HepG2 (cell line): ENCODE measurements at regions of chr20 and their contacts with region 1.

Region 1: DNA sequence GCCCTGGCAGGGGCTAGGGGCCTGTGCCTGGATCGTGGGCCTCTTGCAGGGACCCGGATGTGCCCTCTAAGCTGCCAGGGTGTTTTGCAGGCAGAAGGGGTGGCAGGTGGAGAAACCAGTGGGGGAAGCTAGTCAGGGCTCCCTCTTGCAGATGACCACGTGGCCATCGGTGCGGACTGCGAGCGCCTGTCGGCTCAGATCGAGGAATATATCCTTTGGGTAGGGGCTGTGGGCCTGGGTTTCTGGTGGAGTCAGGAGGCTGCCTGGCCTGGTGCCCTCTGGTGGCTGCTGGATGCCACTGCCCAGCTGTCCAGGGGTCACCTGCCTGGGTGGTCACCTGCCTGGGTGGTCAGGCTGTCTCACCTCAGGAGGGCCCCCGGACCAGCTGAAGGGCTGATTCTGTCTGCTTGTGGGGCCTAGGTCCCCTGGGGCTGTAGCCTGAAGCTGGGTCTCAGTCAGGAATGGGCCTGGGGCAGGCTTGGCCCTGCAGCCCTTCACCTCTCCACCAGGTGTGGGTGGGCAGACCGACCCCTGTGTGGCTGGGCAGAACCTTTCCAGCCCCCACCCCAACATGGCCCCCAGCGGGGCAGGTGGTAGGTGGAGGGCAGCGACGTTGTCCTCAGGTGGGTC is 6.7 kb downstream of the TCEA2 start:
- DNase-seq: peak; percentile 62
- ATAC-seq: peak; percentile 67
- H3K4me3 ChIP-seq: peak overlapping the region in 1 of 3 experiments; percentile 11; a peak in 1 of 6 replicates
- H3K27ac ChIP-seq: no peak overlapping the region
- H3K4me1 ChIP-seq: peaks cover 37% of the 10 kb centered on the region
- H3K27me3 ChIP-seq: peaks cover 3 to 11% of the 10 kb centered on the region in 2 experiments; a peak in 2 of 5 replicates
- CTCF ChIP-seq: peak; percentile 96
- EP300 ChIP-seq: no peak
- POLR2A ChIP-seq: 0 out of 4 replicates have a peak, but pooled peaks of 1 of the 2 experiments have one; percentile 17
- RAD21 ChIP-seq: peak; percentile 91

Region 2: DNA sequence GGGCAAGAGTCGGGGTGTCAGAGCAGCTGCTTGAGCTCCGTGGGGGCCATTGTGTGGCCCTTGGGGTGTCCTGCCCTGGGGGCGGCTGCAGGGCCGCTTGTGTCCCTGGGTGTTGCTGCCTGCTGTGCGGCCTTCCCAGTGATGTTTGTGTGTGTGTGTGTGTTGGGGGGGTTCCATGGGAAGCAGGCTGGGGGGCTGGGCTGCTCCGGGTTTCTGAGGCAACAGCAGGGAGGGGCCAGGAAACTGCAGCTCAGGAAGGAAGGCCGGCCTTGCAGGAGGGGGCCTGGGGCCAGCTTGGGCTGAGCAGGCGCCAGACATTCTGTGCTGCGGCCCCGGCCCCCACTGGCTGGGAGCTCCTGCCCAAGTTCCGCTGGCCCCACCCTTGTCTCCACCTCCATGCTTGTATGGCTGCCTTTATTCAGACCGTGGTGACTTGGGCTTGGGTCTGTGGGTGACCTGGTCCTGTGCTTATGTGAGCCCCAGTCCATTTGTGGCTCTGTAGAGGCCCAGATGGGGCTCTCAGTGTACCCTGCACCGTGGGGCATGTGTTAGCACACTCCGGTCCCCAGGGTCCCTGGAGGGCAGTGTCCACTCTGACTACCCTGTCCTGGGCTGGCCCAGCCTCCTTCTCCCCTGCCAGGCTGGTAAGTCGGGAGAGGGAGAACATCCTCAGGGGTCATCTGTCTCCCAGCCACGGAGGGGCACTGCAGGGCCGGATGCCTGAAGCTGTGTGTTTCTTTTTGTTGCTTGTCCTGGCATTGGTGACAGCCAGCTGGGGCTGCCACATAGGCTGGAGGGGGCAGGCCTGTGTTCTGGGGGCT is 15.7 kb before region 1 on chr20:
- CTCF ChIA-PET with region 1: interaction called, 13 read pairs
- POLR2A ChIA-PET with region 1: interaction called, 34 read pairs
- in situ Hi-C with region 1: no loop called
- intact Hi-C with region 1: loop called (anchors 2 kb)
- DNase-seq: peak; percentile 94
- ATAC-seq: peak; percentile 41
- H3K4me3 ChIP-seq: peak overlapping the region; percentile 45 to 69 (median 46)
- H3K27ac ChIP-seq: peak overlapping the region; percentile 77
- H3K4me1 ChIP-seq: peaks cover 87% of the 10 kb centered on the region
- H3K27me3 ChIP-seq: no peaks in the 10 kb centered on the region; a peak in 1 of 5 replicates
- CTCF ChIP-seq: peak; percentile 91
- EP300 ChIP-seq: peak; percentile 49 to 61; a peak in 3 of 4 replicates
- POLR2A ChIP-seq: peak in 1 of 2 experiments; percentile 65; a peak in 2 of 4 replicates
- RAD21 ChIP-seq: peak; percentile 87